ENCODE measurements at regions of chr2 and their contacts with region 1.

Region 1: DNA sequence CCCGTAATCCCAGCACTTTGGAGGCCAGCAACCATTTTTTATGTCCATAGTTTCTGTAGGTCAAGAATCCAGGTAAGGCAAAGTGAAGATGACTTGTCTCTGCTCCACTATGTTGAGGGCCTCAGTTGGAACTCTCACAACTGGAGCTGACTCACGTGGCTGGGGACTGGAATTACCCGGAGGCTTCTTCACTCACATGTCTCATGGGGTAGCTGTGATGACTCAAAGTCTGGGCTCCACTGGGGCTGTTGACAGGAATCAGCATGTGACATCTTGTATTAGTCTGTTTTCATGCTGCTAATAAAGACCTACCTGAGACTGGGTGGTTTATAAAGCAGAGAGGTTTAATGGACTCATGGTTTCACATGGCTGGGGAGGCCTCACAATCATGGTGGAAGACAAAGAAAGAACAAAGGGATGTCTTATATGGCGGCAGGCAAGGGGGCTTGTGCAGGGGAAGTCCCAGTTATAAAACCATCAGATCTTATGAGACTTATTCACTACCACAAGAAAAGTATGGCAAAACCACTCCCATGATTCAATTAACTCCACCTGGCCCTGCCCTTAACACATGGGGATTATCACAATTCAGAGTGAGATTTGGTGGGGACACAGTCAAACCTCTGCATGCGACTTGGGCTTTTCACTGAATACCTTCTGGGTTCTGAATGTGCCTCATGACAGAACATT is 7.8 kb upstream of the PPP1R1C start:
- DNase-seq: no peak
- H3K4me3 ChIP-seq: no peak overlapping the region
- H3K27ac ChIP-seq: no peak overlapping the region
- H3K4me1 ChIP-seq: no peaks in the 10 kb centered on the region
- H3K27me3 ChIP-seq: no peaks in the 10 kb centered on the region
- CTCF ChIP-seq: no peak

Region 2: DNA sequence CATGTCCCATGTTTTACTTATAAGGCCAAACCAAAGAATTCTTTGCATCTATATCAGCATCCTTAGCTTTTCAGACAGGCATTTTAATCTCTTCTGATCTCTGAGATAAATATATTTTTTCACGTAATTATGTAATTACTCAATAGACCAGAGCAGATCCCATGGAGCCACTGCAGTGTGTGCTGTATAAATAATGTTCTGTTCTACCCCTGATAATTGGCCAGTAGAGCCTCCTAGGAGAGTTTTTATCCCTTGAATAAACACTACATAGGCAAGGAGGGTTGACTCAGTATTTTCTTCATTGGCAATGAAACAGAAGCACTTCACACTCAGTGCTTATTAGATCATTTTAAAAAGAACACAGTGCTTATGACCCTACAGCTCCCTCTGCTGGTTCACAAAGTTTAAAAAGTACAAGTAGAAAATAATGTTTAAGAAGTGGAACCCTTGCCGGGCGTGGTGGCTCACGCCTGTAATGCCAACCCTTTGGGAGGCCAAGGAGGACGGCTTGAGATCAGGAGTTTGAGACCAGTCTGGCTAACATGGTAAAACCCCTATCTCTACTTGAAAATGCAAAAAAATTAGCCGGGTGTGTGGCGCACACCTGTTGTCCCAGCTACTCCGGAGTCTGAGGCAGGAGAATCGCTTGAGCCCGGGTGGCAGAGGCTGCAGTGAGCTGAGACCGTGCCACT is 99.8 kb after region 1 on chr2:
- intact Hi-C with region 1: loop called (anchors 10 kb)
- DNase-seq: peak; percentile 17
- H3K4me3 ChIP-seq: no peak overlapping the region
- H3K27ac ChIP-seq: peak overlapping the region; percentile 24
- H3K4me1 ChIP-seq: peaks cover 8% of the 10 kb centered on the region
- H3K27me3 ChIP-seq: no peaks in the 10 kb centered on the region
- CTCF ChIP-seq: peak; percentile 77